ENCODE measurements at regions of chr5 and their contacts with region 1.

Region 1: DNA sequence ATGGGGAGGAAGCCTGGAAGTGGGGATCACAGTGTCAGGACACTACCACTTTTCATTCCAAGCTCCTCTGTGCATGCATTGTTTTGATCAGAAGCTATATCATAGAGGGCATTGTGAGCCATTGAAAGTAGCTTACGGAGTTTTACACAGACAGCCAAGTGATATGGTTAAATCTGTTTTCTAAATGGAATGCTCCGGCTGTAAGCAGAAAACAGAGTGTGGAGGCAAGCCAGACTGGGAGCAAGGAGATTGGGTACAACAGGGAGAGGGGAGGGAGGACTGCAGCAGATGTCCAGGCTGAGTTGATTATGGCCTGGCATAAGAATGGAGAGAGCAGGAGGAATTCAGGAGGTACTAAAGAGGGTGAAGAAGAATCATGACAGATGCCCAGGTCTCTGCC is 15.5 kb upstream of the SOWAHA start:
- DNase-seq: no peak
- ATAC-seq: no peak
- H3K4me3 ChIP-seq: no peak overlapping the region
- H3K27ac ChIP-seq: no peak overlapping the region
- H3K4me1 ChIP-seq: no peaks in the 10 kb centered on the region
- H3K27me3 ChIP-seq: no peaks in the 10 kb centered on the region
- CTCF ChIP-seq: no peak
- EP300 ChIP-seq: no peak
- POLR2A ChIP-seq: no peak
- RAD21 ChIP-seq: no peak

Region 2: GRCh38 chr5:132746954-132747615 is 50.6 kb before region 1 on chr5 and contains the start of gene CCNI2:
- CTCF ChIA-PET with region 1: interaction called, 15 read pairs
- POLR2A ChIA-PET with region 1: interaction called, 7 read pairs
- RAD21 ChIA-PET with region 1: interaction called, 16 read pairs
- SMC1A ChIA-PET with region 1: interaction called, 44 read pairs
- in situ Hi-C with region 1: no loop called
- intact Hi-C with region 1: no loop called
- DNase-seq: no peak
- ATAC-seq: peak; percentile 71
- H3K4me3 ChIP-seq: peak within 1 kb of the TSS; percentile 72
- H3K27ac ChIP-seq: no peak within 1 kb of the TSS
- H3K4me1 ChIP-seq: peaks cover 23% of the 10 kb centered on the region
- H3K27me3 ChIP-seq: no peaks in the 10 kb centered on the region
- CTCF ChIP-seq: peak; percentile 47 to 56 (median 53)
- EP300 ChIP-seq: no peak
- POLR2A ChIP-seq: peak; percentile 67
- RAD21 ChIP-seq: peak; percentile 20; the same call in 1 of the 2 replicates
- polyA plus RNA-seq, gene CCNI2: 3.1 to 8.0 TPM

Region 3: GRCh38 chr5:132787076-132787475 is 10.6 kb before region 1 on chr5:
- CTCF ChIA-PET with region 1: interaction called, 19 read pairs
- POLR2A ChIA-PET with region 1: interaction called, 10 read pairs
- RAD21 ChIA-PET with region 1: interaction called, 8 read pairs
- SMC1A ChIA-PET with region 1: interaction called, 15 read pairs
- in situ Hi-C with region 1: no loop called
- intact Hi-C with region 1: no loop called
- DNase-seq: no peak
- ATAC-seq: no peak
- H3K4me3 ChIP-seq: no peak overlapping the region
- H3K27ac ChIP-seq: no peak overlapping the region
- H3K4me1 ChIP-seq: 0 out of 2 replicates have a peak, but pooled peaks cover 3% of the 10 kb centered on the region
- H3K27me3 ChIP-seq: no peaks in the 10 kb centered on the region
- CTCF ChIP-seq: no peak
- EP300 ChIP-seq: no peak
- POLR2A ChIP-seq: no peak
- RAD21 ChIP-seq: no peak

Region 4: DNA sequence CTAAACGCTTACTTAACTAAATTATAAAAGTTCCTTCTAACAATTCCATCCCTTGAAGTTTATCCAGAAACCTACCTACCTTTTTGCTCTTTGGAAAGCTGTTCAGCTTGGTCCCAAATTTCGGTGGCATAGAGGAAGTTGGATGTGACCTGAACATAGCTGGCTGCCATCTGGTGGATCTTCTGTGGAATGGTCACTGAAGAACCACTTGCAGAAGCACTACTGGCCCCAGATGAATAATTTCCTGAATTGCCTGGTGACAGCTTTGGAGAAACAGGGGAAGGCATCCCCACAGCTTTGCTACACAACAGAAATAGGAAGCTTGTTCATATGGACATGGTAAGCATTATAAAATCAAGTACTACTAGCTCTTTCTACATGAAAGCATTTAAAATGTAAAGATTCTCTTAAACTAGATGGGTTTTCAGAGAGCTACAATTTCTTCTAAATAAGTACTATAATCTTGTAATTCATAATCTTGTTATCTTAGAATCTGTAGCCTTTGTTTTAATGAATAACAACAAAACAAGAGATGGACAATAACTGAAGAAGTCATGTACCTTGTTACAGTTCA is 85.7 kb after region 1 on chr5:
- CTCF ChIA-PET with region 1: no interaction called
- POLR2A ChIA-PET with region 1: no interaction called
- RAD21 ChIA-PET with region 1: no interaction called
- SMC1A ChIA-PET with region 1: no interaction called
- in situ Hi-C with region 1: no loop called
- intact Hi-C with region 1: no loop called
- DNase-seq: no peak
- ATAC-seq: peak; percentile 96
- H3K4me3 ChIP-seq: no peak overlapping the region
- H3K27ac ChIP-seq: no peak overlapping the region
- H3K4me1 ChIP-seq: no peaks in the 10 kb centered on the region
- H3K27me3 ChIP-seq: no peaks in the 10 kb centered on the region
- CTCF ChIP-seq: peak; percentile 61 to 78 (median 67)
- EP300 ChIP-seq: no peak
- POLR2A ChIP-seq: no peak
- RAD21 ChIP-seq: peak; percentile 64